Gastrocnemius medialis (tissue), 4 donors: ENCODE measurements at regions of chr5 and their contacts with region 1.

Region 1: DNA sequence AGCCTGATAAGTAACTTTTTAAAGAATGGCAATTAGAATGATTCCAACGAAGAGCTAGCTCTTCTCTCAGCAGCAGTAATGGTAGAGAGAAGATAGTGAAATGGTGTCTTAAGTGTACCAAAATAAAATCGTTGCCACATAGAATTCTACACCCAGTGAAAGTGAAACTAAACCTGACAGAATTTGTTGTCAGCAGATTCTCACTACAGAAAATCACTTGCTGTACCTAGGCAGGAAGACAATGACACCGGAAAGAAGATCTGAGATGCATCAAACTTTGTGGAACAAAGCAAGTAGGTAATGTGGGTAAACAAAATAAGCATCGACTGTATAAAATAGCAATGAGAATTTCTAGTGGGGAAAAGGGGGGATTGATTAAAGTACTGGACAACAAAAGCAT is 20.7 kb upstream of the EBF1 start:
- DNase-seq: no peak
- ATAC-seq: peak in 1 of 2 donors; percentile 84
- H3K4me3 ChIP-seq: peak overlapping the region in 3 of 4 donors; percentile 14 to 38 (median 19)
- H3K27ac ChIP-seq: no peak overlapping the region
- H3K4me1 ChIP-seq: peaks cover 0 to 6% of the 10 kb centered on the region in 2 donors
- H3K27me3 ChIP-seq: no peaks in the 10 kb centered on the region
- CTCF ChIP-seq: no peak
- POLR2A ChIP-seq: no peak

Region 2: DNA sequence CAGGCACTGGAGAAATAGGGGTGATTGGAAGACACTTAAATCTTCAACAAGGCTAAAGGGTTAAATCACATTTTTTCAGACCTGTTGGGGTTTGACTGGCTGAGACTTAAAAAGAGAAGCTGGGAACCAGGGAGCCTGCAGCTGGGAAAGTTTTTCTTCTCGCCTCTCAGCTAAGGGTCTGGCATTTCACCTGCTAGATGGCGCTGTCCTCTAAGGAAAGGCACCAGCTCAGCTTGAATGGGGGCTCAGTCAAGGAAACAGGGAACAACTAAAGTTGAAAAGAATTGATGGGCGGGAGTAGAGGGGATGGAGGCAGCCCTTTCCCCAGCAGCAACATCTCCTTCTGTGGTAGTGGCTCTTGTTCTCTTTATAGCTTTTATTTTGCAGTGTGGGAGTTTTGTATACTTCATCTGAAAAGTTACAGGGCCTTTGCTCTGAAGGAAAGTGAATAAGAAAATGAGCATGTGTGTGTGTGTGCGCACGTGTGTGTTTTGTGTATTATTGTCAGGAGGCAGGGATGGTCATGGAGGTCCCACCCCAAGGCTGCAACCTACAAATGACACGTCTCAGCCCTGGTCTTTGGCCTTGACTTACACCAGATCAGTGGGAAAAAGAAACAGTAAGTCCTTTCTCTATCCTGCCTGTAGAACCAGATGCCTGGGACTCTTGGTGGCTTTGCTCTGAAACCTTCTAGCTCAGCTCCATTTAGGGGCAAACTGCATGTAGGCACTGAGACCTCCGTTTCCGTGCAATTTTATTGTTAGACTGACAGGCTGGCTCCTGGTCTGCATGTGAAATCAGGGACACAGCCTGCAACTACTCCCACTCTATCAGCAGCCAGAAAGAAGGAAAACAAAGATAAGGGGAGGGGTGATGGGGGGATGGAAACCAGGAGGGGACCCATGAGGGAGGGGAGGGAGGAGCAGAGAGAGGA is 945.3 kb before region 1 on chr5:
- in situ Hi-C with region 1: loop called in 1 of 4 experiments (anchors 5 kb)
- intact Hi-C with region 1: no loop called
- DNase-seq: peak; percentile 38 to 42
- ATAC-seq: peak; percentile 43 to 61
- H3K4me3 ChIP-seq: no peak overlapping the region
- H3K27ac ChIP-seq: no peak overlapping the region
- H3K4me1 ChIP-seq: no peaks in the 10 kb centered on the region
- H3K27me3 ChIP-seq: no peaks in the 10 kb centered on the region
- CTCF ChIP-seq: peak; percentile 36 to 66 (median 56)
- POLR2A ChIP-seq: no peak

Region 3: GRCh38 chr5:159274676-159275075 is 154.2 kb after region 1 on chr5:
- in situ Hi-C with region 1: no loop called
- intact Hi-C with region 1: no loop called
- DNase-seq: no peak
- ATAC-seq: no peak
- H3K4me3 ChIP-seq: no peak overlapping the region
- H3K27ac ChIP-seq: no peak overlapping the region
- H3K4me1 ChIP-seq: no peaks in the 10 kb centered on the region
- H3K27me3 ChIP-seq: no peaks in the 10 kb centered on the region
- CTCF ChIP-seq: no peak
- POLR2A ChIP-seq: no peak

Region 4: DNA sequence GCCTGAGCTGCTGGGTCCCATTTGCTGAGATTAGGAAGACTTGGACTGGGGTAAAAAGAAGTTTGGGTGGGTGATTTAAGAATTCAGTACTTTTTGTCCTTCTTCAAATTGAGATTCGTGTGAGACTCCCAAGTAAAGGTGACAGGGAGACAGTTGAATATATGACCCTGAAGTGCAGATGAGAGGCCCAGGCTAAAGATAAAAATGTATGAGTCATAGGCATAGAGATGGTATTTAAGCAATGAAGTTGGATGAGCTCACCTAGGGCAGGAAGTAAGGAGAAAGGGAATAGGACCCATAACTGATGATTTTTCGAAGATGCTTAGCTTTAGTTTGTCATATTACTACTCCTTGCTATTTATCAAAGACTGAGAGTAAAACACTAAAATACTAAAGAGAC is 540.0 kb after region 1 on chr5:
- in situ Hi-C with region 1: no loop called
- intact Hi-C with region 1: no loop called
- DNase-seq: no peak
- ATAC-seq: no peak
- H3K4me3 ChIP-seq: no peak overlapping the region
- H3K27ac ChIP-seq: no peak overlapping the region
- H3K4me1 ChIP-seq: no peaks in the 10 kb centered on the region
- H3K27me3 ChIP-seq: no peaks in the 10 kb centered on the region
- CTCF ChIP-seq: no peak
- POLR2A ChIP-seq: no peak